ENCODE measurements at regions of chr15 and their contacts with region 1.

Region 1: GRCh38 chr15:98853611-98854311 is 153.8 kb downstream of the PGPEP1L start:
- DNase-seq: no peak
- H3K4me3 ChIP-seq: peak overlapping the region; percentile 31 to 76; a peak in 3 of 4 replicates
- H3K27ac ChIP-seq: peak overlapping the region; percentile 68 to 86
- H3K4me1 ChIP-seq: peaks cover 46 to 51% of the 10 kb centered on the region in 2 experiments
- H3K27me3 ChIP-seq: no peaks in the 10 kb centered on the region
- CTCF ChIP-seq: no peak
- EP300 ChIP-seq: no peak; a peak in 1 of 4 replicates
- RAD21 ChIP-seq: no peak

Region 2: GRCh38 chr15:98865397-98866339 is 11.9 kb after region 1 on chr15:
- CTCF ChIA-PET with region 1: interaction called, 10 read pairs
- POLR2A ChIA-PET with region 1: interaction called, 5 read pairs
- DNase-seq: peak; percentile 84
- H3K4me3 ChIP-seq: peak overlapping the region; percentile 60 to 65
- H3K27ac ChIP-seq: peak overlapping the region; percentile 90 to 91
- H3K4me1 ChIP-seq: peaks cover 3 to 27% of the 10 kb centered on the region in 2 experiments; a peak in 3 of 4 replicates
- H3K27me3 ChIP-seq: no peaks in the 10 kb centered on the region
- CTCF ChIP-seq: no peak
- EP300 ChIP-seq: no peak
- RAD21 ChIP-seq: no peak

Region 3: GRCh38 chr15:99042892-99043291 is 189.1 kb after region 1 on chr15:
- CTCF ChIA-PET with region 1: no interaction called
- POLR2A ChIA-PET with region 1: no interaction called
- DNase-seq: no peak
- H3K4me3 ChIP-seq: no peak overlapping the region
- H3K27ac ChIP-seq: no peak overlapping the region
- H3K4me1 ChIP-seq: no peaks in the 10 kb centered on the region
- H3K27me3 ChIP-seq: no peaks in the 10 kb centered on the region; the same call in 1 of the 2 replicates
- CTCF ChIP-seq: no peak
- EP300 ChIP-seq: no peak
- RAD21 ChIP-seq: no peak